ENCODE measurements at regions of chr16 and their contacts with region 1.

Region 1: DNA sequence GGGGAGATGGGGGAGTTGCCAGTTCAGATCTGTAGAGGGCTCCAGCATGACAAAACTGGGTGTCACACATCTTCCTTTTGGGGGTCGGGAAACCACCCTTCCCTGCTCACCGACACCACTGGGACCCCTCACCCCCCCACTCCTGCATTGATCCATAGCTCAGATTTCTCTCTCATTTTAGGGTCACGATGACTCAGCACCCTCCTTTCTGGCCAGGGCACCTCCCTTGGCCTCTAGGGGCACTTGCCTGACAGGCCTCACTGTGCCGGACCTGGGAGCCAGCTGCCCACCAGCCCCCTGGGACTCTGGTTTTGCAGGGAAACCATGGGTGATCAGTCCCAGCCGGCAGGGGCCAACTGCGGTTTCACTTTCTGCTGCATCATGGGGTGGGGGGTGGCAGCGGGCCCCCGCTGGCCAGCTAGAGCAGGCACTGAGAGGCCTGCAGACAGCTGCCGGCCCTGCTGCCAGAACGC is 239.4 kb downstream of the MRTFB start:
- DNase-seq: peak; percentile 52 to 64
- H3K4me3 ChIP-seq: peak overlapping the region; percentile 96; the same call in 1 of the 2 replicates
- H3K27ac ChIP-seq: peak overlapping the region; percentile 99
- H3K4me1 ChIP-seq: peaks cover 81% of the 10 kb centered on the region
- H3K27me3 ChIP-seq: no peaks in the 10 kb centered on the region
- CTCF ChIP-seq: peak; percentile 48; the same call in 1 of the 2 replicates

Region 2: GRCh38 chr16:14244196-14245010 is 66.2 kb before region 1 on chr16:
- CTCF ChIA-PET with region 1: no interaction called
- POLR2A ChIA-PET with region 1: no interaction called
- intact Hi-C with region 1: no loop called
- DNase-seq: no peak
- H3K4me3 ChIP-seq: no peak overlapping the region
- H3K27ac ChIP-seq: peak overlapping the region; percentile 36; the same call in 1 of the 2 replicates
- H3K4me1 ChIP-seq: no peaks in the 10 kb centered on the region
- H3K27me3 ChIP-seq: no peaks in the 10 kb centered on the region
- CTCF ChIP-seq: no peak

Region 3: DNA sequence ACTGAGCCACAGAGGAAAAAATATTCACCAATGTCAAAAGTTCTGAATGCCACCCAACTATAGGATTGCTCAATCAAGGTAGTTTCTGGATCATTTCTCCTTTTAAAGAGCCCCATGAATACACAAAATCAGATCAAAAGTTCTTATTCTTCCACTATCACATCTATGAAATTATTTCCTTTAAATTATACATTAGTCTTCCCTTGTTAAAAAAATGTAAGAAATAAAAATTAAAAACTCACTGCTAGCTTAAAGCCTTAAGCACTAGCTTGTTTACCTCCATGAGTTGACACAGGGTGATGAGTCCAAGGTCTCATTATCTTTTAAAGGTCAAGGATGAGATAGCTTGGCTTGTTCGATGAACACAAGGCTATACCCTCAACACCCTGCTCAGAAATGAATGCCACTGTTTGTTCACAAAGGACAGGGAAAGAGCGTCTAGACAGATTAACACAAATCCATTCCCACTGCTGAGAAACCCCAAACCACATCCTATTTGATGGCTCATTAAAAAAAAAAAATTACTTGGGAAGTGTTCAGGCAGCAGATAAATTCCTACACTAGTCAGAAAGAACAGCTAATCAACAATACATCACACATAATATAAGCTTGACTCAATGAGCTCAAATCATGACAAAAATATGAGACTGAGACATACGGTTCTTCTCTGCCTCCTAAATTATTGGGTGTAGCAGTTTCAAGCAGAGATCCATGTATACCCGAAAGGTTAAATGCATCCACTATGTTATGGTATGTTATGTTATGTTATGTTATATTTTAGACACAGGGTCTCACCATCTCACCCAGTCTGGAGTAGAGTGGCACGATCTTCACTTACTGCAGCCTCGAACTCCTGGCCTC is 200.6 kb after region 1 on chr16:
- CTCF ChIA-PET with region 1: interaction called, 13 read pairs
- POLR2A ChIA-PET with region 1: no interaction called
- intact Hi-C with region 1: no loop called
- DNase-seq: no peak
- H3K4me3 ChIP-seq: no peak overlapping the region
- H3K27ac ChIP-seq: peak overlapping the region; percentile 36; the same call in 1 of the 2 replicates
- H3K4me1 ChIP-seq: peaks cover 19% of the 10 kb centered on the region
- H3K27me3 ChIP-seq: no peaks in the 10 kb centered on the region
- CTCF ChIP-seq: no peak

Region 4: GRCh38 chr16:14600164-14600563 is 289.6 kb after region 1 on chr16:
- CTCF ChIA-PET with region 1: no interaction called
- POLR2A ChIA-PET with region 1: no interaction called
- intact Hi-C with region 1: no loop called
- DNase-seq: peak in 1 of 2 experiments; percentile 43
- H3K4me3 ChIP-seq: no peak overlapping the region
- H3K27ac ChIP-seq: no peak overlapping the region
- H3K4me1 ChIP-seq: no peaks in the 10 kb centered on the region
- H3K27me3 ChIP-seq: no peaks in the 10 kb centered on the region
- CTCF ChIP-seq: peak; percentile 72